ENCODE measurements at regions of chr19 and their contacts with region 1.

Region 1: GRCh38 chr19:38812841-38813320 is at the start of gene LGALS4:
- DNase-seq: peak; percentile 96
- H3K4me3 ChIP-seq: peak within 1 kb of the TSS; percentile 72
- H3K27ac ChIP-seq: peak within 1 kb of the TSS; percentile 93
- H3K4me1 ChIP-seq: peaks cover 8% of the 10 kb centered on the region
- H3K27me3 ChIP-seq: no peaks in the 10 kb centered on the region
- CTCF ChIP-seq: no peak
- total RNA-seq, gene LGALS4: 6,357 to 8,309 TPM

Region 2: DNA sequence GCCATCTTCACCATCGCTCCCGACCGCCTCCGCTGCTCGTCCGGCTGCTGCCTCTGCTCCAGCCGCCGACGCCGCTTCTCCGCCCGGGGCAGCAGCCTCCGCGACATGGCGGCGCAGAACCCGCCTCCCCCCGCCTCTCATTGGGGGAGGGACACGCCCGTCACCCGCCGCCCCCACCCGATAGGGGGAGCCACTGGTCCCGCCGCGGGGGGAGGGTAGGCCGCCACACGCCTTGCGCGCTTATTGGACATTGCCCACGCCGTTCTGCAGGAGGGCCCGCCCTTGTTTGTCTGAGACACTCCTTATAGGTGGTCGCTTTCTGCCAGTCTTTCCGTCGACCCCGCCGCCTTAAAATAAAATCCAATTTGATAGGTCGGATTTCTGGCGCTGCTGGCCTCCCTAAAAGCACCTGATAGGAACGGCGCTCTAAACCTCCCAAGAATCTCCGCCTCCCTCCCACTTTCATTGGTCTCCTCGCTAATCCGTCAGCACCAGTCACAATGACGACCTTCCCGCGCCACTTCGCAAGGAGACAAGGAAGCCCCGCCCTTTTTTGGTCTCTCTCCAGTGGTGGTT is 37.1 kb after region 1 on chr19 and contains the start of gene HNRNPL:
- intact Hi-C with region 1: loop called (anchors 5 kb)
- DNase-seq: peak; percentile 100
- H3K4me3 ChIP-seq: peak within 1 kb of the TSS; percentile 86
- H3K27ac ChIP-seq: peak within 1 kb of the TSS; percentile 100
- H3K4me1 ChIP-seq: peaks cover 6% of the 10 kb centered on the region
- H3K27me3 ChIP-seq: no peaks in the 10 kb centered on the region
- CTCF ChIP-seq: peak; percentile 52
- total RNA-seq, gene HNRNPL: 305 to 418 TPM

Region 3: GRCh38 chr19:40358773-40359172 is 1545.9 kb after region 1 on chr19:
- intact Hi-C with region 1: no loop called
- DNase-seq: no peak
- H3K4me3 ChIP-seq: no peak overlapping the region
- H3K27ac ChIP-seq: no peak overlapping the region
- H3K4me1 ChIP-seq: no peaks in the 10 kb centered on the region
- H3K27me3 ChIP-seq: no peaks in the 10 kb centered on the region
- CTCF ChIP-seq: no peak

Measured in colonic mucosa (tissue), 4 donors.